B cell (primary cell): ENCODE measurements at regions of chr6 and their contacts with region 1.

Region 1: DNA sequence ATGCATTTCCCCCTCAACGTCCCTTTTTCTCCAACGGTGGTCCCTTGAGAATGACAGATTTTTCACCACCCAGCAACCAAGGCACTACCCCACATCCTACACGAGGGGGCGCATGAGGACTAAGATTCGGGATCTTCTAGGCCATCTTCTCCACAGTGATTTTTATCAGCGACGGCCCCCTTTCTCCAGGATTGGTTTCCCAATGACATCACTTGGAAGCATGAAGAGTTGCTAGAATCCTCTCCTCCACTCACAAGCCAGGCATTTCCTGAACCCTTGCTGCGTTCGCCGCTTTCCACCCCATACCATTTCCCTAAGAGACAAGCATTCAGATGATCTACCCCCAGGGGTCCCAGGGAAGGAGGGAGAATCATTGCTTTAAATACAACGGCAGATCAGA is 252.0 kb downstream of the HIVEP2 start:
- DNase-seq: peak; percentile 79
- ATAC-seq: peak; percentile 91
- H3K4me3 ChIP-seq: no peak overlapping the region
- H3K4me3 Mint-ChIP-seq: no peak overlapping the region
- H3K27ac ChIP-seq: no peak overlapping the region
- H3K27ac Mint-ChIP-seq: no peak overlapping the region
- H3K4me1 ChIP-seq: peaks cover 4% of the 10 kb centered on the region in 2 donors
- H3K4me1 Mint-ChIP-seq: peaks cover 5% of the 10 kb centered on the region
- H3K27me3 ChIP-seq: no peaks in the 10 kb centered on the region
- H3K27me3 Mint-ChIP-seq: no peaks in the 10 kb centered on the region
- CTCF ChIP-seq: peak; percentile 98

Region 2: DNA sequence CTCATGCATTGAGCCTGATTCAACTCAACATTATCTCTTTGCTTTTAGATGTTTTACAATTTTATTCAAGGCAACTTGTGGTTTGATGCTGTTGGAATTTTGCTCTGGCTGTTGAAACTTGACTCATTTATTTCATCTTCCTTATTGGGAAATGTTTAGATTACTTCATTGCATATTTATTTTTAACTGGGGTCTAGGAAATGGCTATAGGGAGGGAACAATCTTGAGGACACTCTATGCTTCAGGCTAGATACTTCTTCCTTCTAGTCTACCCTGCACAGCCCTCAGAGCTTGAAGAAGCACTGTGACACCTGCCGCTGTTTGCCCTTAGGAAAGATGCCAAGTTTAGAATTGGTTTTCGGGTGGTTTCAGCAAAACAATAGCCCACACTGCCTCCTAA is 207.7 kb before region 1 on chr6:
- CTCF ChIA-PET with region 1: no interaction called
- POLR2A ChIA-PET with region 1: no interaction called
- intact Hi-C with region 1: no loop called
- DNase-seq: no peak
- ATAC-seq: no peak
- H3K4me3 ChIP-seq: no peak overlapping the region
- H3K4me3 Mint-ChIP-seq: no peak overlapping the region
- H3K27ac ChIP-seq: no peak overlapping the region
- H3K27ac Mint-ChIP-seq: no peak overlapping the region
- H3K4me1 ChIP-seq: no peaks in the 10 kb centered on the region
- H3K4me1 Mint-ChIP-seq: no peaks in the 10 kb centered on the region
- H3K27me3 ChIP-seq: peaks cover 0 to 6% (median 1%) of the 10 kb centered on the region in 4 experiments
- H3K27me3 Mint-ChIP-seq: no peaks in the 10 kb centered on the region
- CTCF ChIP-seq: no peak

Region 3: DNA sequence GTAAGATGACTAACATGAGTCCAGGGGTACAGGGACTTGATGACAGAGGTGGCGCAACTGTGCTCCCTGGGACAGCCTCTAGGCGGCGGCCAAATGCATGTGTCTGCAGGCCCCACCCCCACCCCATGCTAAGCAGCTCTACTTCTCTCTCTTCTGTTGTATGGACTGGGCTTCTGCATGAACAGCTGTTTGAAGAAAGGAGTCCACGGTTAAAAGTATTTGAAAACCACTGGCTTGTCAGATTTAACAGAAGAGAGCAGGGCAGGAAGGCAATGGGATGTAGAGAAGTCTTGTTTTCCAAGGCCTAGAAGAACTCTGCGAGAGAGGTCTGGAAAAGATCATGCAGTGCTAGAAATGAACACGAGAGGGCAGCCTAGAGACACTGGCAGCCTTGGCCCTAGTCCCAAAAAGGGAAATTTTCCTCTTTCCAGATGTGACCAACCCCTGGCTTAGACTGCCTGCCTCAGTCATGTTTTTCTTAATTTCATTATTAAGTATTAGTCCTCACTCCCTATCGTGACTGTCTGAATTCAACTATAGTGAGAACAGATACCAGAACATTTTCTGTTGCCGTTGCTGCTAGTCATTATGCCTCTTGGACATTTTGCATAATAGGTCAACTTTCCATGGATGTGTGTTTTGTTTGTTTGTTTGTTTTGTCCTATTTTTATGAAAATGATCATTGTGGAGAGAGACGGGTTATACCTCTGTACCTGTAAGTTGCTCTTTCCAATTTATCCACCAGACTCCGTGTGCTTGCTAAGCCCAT is 126.1 kb before region 1 on chr6:
- CTCF ChIA-PET with region 1: interaction called, 4 read pairs
- POLR2A ChIA-PET with region 1: no interaction called
- intact Hi-C with region 1: loop called (anchors 5 kb)
- DNase-seq: peak; percentile 51
- ATAC-seq: peak; percentile 49
- H3K4me3 ChIP-seq: no peak overlapping the region
- H3K4me3 Mint-ChIP-seq: no peak overlapping the region
- H3K27ac ChIP-seq: no peak overlapping the region
- H3K27ac Mint-ChIP-seq: no peak overlapping the region
- H3K4me1 ChIP-seq: no peaks in the 10 kb centered on the region
- H3K4me1 Mint-ChIP-seq: no peaks in the 10 kb centered on the region
- H3K27me3 ChIP-seq: no peaks in the 10 kb centered on the region
- H3K27me3 Mint-ChIP-seq: peaks cover 9% of the 10 kb centered on the region
- CTCF ChIP-seq: peak; percentile 84

Region 4: GRCh38 chr6:142946181-142946923 is 253.4 kb after region 1 on chr6:
- CTCF ChIA-PET with region 1: interaction called, 6 read pairs
- POLR2A ChIA-PET with region 1: no interaction called
- intact Hi-C with region 1: loop called (anchors 2 kb)
- DNase-seq: peak; percentile 93
- ATAC-seq: peak; percentile 28
- H3K4me3 ChIP-seq: peak overlapping the region; percentile 85 to 96 (median 90)
- H3K4me3 Mint-ChIP-seq: peak overlapping the region; percentile 99
- H3K27ac ChIP-seq: peak overlapping the region; percentile 100
- H3K27ac Mint-ChIP-seq: peak overlapping the region; percentile 99
- H3K4me1 ChIP-seq: peaks cover 19 to 29% of the 10 kb centered on the region in 2 donors
- H3K4me1 Mint-ChIP-seq: peaks cover 43% of the 10 kb centered on the region
- H3K27me3 ChIP-seq: no peaks in the 10 kb centered on the region
- H3K27me3 Mint-ChIP-seq: no peaks in the 10 kb centered on the region
- CTCF ChIP-seq: no peak

Region 5: GRCh38 chr6:143026696-143027449 is 333.9 kb after region 1 on chr6:
- CTCF ChIA-PET with region 1: interaction called, 159 read pairs
- POLR2A ChIA-PET with region 1: no interaction called
- intact Hi-C with region 1: loop called (anchors 1 kb)
- DNase-seq: peak; percentile 69
- ATAC-seq: peak; percentile 39
- H3K4me3 ChIP-seq: no peak overlapping the region
- H3K4me3 Mint-ChIP-seq: no peak overlapping the region
- H3K27ac ChIP-seq: no peak overlapping the region
- H3K27ac Mint-ChIP-seq: no peak overlapping the region
- H3K4me1 ChIP-seq: no peaks in the 10 kb centered on the region
- H3K4me1 Mint-ChIP-seq: peaks cover 3% of the 10 kb centered on the region
- H3K27me3 ChIP-seq: no peaks in the 10 kb centered on the region
- H3K27me3 Mint-ChIP-seq: no peaks in the 10 kb centered on the region
- CTCF ChIP-seq: peak; percentile 74

Region 6: GRCh38 chr6:143427109-143427817 is 734.3 kb after region 1 on chr6:
- CTCF ChIA-PET with region 1: interaction called, 102 read pairs
- POLR2A ChIA-PET with region 1: no interaction called
- intact Hi-C with region 1: loop called (anchors 1 kb)
- DNase-seq: peak; percentile 75
- ATAC-seq: peak; percentile 100
- H3K4me3 ChIP-seq: no peak overlapping the region
- H3K4me3 Mint-ChIP-seq: no peak overlapping the region
- H3K27ac ChIP-seq: no peak overlapping the region
- H3K27ac Mint-ChIP-seq: no peak overlapping the region
- H3K4me1 ChIP-seq: no peaks in the 10 kb centered on the region
- H3K4me1 Mint-ChIP-seq: peaks cover 2% of the 10 kb centered on the region
- H3K27me3 ChIP-seq: no peaks in the 10 kb centered on the region
- H3K27me3 Mint-ChIP-seq: no peaks in the 10 kb centered on the region
- CTCF ChIP-seq: peak; percentile 98